SK-N-SH (cell line): ENCODE measurements at regions of chr4 and their contacts with region 1.

Region 1: GRCh38 chr4:4248029-4248884 is at the start of gene TMEM128:
- DNase-seq: peak; percentile 96
- H3K4me3 ChIP-seq: peak within 1 kb of the TSS; percentile 71 to 93
- H3K27ac ChIP-seq: peak within 1 kb of the TSS; percentile 91 to 98
- H3K4me1 ChIP-seq: peaks cover 5 to 11% of the 10 kb centered on the region in 2 experiments
- H3K27me3 ChIP-seq: no peaks in the 10 kb centered on the region
- CTCF ChIP-seq: peak; percentile 48
- EP300 ChIP-seq: no peak
- RAD21 ChIP-seq: no peak
- polyA plus RNA-seq, gene TMEM128: 33.7 and 44.5 TPM in 2 replicates

Region 2: DNA sequence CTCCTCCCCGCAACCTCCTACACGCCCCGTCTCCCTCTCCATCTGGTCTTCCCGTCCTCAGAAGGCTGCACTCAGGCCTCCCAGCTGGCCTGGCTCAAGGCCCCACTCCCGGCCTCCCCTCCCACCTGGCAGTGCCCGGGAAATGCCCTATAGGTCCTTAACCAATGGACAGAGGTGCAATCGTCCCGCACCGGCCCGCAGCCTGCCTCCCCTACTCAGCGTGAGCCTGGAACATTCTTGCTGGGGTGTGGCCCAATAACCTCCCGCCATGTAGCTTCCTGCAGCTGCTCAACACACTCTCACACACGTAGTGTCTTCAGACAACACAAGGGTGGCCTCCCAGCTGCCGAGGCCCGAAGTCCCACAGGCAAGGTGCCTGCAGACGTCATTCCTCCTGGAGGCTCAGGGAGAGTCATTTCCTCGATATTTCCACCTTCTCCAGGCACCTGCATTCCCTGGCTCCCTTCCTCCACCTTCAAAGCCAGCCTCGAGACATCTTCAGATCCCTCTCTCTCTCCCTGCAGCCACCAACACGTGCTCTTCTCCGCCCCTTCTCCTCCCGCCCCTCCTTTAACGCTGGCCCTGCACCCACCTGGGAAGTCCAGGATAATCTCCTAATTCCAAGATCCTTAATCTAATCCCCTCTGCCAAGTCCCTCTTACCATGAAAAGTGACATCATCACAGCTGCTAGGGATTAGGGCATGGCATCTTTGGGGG is 425.9 kb before region 1 on chr4:
- CTCF ChIA-PET with region 1: no interaction called
- POLR2A ChIA-PET with region 1: no interaction called
- DNase-seq: no peak
- H3K4me3 ChIP-seq: no peak overlapping the region
- H3K27ac ChIP-seq: no peak overlapping the region; a peak in 1 of 4 replicates
- H3K4me1 ChIP-seq: peaks cover 0 to 18% of the 10 kb centered on the region in 2 experiments; a peak in 1 of 4 replicates
- H3K27me3 ChIP-seq: no peaks in the 10 kb centered on the region
- CTCF ChIP-seq: no peak
- EP300 ChIP-seq: no peak
- RAD21 ChIP-seq: no peak

Region 3: GRCh38 chr4:4233610-4234009 is 14.6 kb before region 1 on chr4:
- CTCF ChIA-PET with region 1: no interaction called
- POLR2A ChIA-PET with region 1: no interaction called
- DNase-seq: no peak
- H3K4me3 ChIP-seq: no peak overlapping the region
- H3K27ac ChIP-seq: no peak overlapping the region
- H3K4me1 ChIP-seq: no peaks in the 10 kb centered on the region
- H3K27me3 ChIP-seq: peaks cover 6% of the 10 kb centered on the region
- CTCF ChIP-seq: no peak
- EP300 ChIP-seq: no peak
- RAD21 ChIP-seq: no peak

Region 4: GRCh38 chr4:4260253-4260652 is 12.0 kb after region 1 on chr4:
- CTCF ChIA-PET with region 1: interaction called, 10 read pairs
- POLR2A ChIA-PET with region 1: no interaction called
- DNase-seq: peak; percentile 59
- H3K4me3 ChIP-seq: no peak overlapping the region
- H3K27ac ChIP-seq: no peak overlapping the region
- H3K4me1 ChIP-seq: no peaks in the 10 kb centered on the region
- H3K27me3 ChIP-seq: no peaks in the 10 kb centered on the region
- CTCF ChIP-seq: peak; percentile 63
- EP300 ChIP-seq: no peak
- RAD21 ChIP-seq: peak; percentile 59

Region 5: GRCh38 chr4:4334798-4335520 is 86.7 kb after region 1 on chr4:
- CTCF ChIA-PET with region 1: interaction called, 43 read pairs
- POLR2A ChIA-PET with region 1: interaction called, 5 read pairs
- DNase-seq: peak; percentile 66
- H3K4me3 ChIP-seq: no peak overlapping the region
- H3K27ac ChIP-seq: no peak overlapping the region
- H3K4me1 ChIP-seq: no peaks in the 10 kb centered on the region; a peak in 1 of 4 replicates
- H3K27me3 ChIP-seq: no peaks in the 10 kb centered on the region; the same call in 1 of the 2 replicates
- CTCF ChIP-seq: peak; percentile 65
- EP300 ChIP-seq: no peak
- RAD21 ChIP-seq: peak; percentile 77

Region 6: GRCh38 chr4:4362991-4363697 is 114.9 kb after region 1 on chr4:
- CTCF ChIA-PET with region 1: no interaction called
- POLR2A ChIA-PET with region 1: no interaction called
- DNase-seq: no peak
- H3K4me3 ChIP-seq: no peak overlapping the region
- H3K27ac ChIP-seq: no peak overlapping the region
- H3K4me1 ChIP-seq: no peaks in the 10 kb centered on the region
- H3K27me3 ChIP-seq: no peaks in the 10 kb centered on the region; the same call in 1 of the 2 replicates
- CTCF ChIP-seq: no peak
- EP300 ChIP-seq: no peak
- RAD21 ChIP-seq: no peak